Mammary epithelial cell (primary cell): ENCODE measurements at regions of chr11 and their contacts with region 1.

Region 1: GRCh38 chr11:3773180-3773579 is 24.2 kb downstream of the NUP98 start:
- DNase-seq: no peak
- H3K4me3 ChIP-seq: no peak overlapping the region
- H3K27ac ChIP-seq: no peak overlapping the region
- H3K4me1 ChIP-seq: no peaks in the 10 kb centered on the region
- H3K27me3 ChIP-seq: no peaks in the 10 kb centered on the region
- CTCF ChIP-seq: no peak

Region 2: GRCh38 chr11:3709977-3710376 is 63.2 kb before region 1 on chr11:
- CTCF ChIA-PET with region 1: no interaction called
- dilution Hi-C with region 1: no loop called
- in situ Hi-C with region 1: no loop called
- intact Hi-C with region 1: loop called (anchors 5 kb)
- DNase-seq: peak; percentile 3
- H3K4me3 ChIP-seq: no peak overlapping the region
- H3K27ac ChIP-seq: no peak overlapping the region
- H3K4me1 ChIP-seq: no peaks in the 10 kb centered on the region
- H3K27me3 ChIP-seq: no peaks in the 10 kb centered on the region
- CTCF ChIP-seq: no peak

Region 3: GRCh38 chr11:3786781-3787428 is 13.7 kb after region 1 on chr11:
- CTCF ChIA-PET with region 1: no interaction called
- dilution Hi-C with region 1: no loop called
- in situ Hi-C with region 1: no loop called
- intact Hi-C with region 1: no loop called
- DNase-seq: no peak
- H3K4me3 ChIP-seq: no peak overlapping the region
- H3K27ac ChIP-seq: no peak overlapping the region
- H3K4me1 ChIP-seq: peaks cover 3% of the 10 kb centered on the region
- H3K27me3 ChIP-seq: no peaks in the 10 kb centered on the region
- CTCF ChIP-seq: no peak